ENCODE measurements at regions of chr7 and their contacts with region 1.

Region 1: DNA sequence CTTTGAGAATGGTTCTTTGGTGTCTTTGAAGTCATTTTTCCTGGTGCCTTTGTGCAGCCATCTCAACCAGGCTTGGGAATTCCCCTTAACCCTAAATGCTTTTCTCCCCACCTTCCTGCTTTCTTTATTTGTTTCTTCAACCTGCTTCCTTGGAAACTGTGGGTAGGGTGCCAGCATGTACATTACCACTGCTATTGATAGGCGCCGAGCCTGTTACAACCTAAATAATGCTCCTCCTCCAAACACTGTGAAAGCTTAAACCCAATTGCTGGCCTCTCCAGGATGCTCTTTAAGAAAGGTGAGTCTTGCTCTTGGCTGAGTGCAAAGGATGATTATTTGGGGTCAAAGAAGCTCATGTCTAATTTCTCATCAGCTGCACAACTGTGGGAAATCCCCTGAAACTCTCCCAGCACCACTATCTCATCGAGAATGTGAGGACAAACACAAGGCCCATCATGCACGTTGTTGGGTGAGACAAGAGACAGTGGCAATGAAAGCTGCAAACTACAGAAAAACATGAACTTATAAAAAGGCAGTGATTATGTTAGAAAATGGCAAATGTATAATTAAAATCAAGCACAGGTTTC is 285.5 kb upstream of the IGFBP3 start:
- DNase-seq: peak; percentile 48 to 52
- H3K4me3 ChIP-seq: no peak overlapping the region
- H3K27ac ChIP-seq: peak overlapping the region; percentile 63; the same call in 1 of the 2 replicates
- H3K4me1 ChIP-seq: peaks cover 25% of the 10 kb centered on the region
- H3K27me3 ChIP-seq: no peaks in the 10 kb centered on the region
- CTCF ChIP-seq: no peak

Region 2: DNA sequence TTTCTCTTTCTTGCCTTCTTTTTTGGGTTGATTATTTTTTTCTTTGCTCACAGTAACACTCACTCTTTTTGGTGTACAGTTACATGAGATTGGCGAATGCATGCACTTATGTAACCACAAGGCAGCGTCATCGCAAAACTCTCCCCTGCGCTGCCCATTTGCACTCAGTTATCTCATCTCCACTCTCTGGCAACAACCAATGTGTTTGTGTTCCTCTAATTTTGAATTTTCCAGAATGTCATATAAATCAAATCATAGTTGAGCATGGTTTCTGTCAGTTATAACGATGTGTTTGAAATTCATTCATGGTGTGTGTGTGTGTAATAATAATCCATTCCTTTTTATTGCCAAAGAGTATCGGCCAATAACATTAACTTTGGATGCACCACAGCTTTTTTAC is 262.5 kb before region 1 on chr7:
- CTCF ChIA-PET with region 1: no interaction called
- POLR2A ChIA-PET with region 1: interaction called, 11 read pairs
- intact Hi-C with region 1: no loop called
- DNase-seq: no peak
- H3K4me3 ChIP-seq: no peak overlapping the region
- H3K27ac ChIP-seq: no peak overlapping the region
- H3K4me1 ChIP-seq: no peaks in the 10 kb centered on the region
- H3K27me3 ChIP-seq: no peaks in the 10 kb centered on the region
- CTCF ChIP-seq: no peak

Region 3: DNA sequence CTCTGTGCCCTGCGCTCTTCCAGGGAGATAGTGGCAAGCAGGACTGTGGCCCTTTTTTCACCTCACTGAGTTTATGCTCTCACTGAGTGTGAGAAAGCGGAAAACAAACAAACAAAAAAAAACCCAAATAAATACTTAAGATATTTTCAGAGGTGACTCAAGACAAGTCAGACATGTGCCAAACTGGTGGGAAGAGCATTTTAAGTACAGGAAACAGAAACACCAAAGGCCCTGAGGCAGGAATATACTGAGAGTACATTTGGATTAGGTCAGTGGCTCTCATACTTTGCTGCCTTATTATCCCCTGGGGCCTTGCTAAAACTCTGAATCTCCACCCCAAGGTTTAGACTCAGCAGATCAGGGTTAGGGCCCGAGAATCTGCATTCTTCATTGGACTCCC is 173.6 kb before region 1 on chr7:
- CTCF ChIA-PET with region 1: no interaction called
- POLR2A ChIA-PET with region 1: no interaction called
- intact Hi-C with region 1: loop called (anchors 2 kb)
- DNase-seq: peak; percentile 54 to 99
- H3K4me3 ChIP-seq: no peak overlapping the region; the same call in 1 of the 2 replicates
- H3K27ac ChIP-seq: peak overlapping the region; percentile 92
- H3K4me1 ChIP-seq: peaks cover 58% of the 10 kb centered on the region
- H3K27me3 ChIP-seq: no peaks in the 10 kb centered on the region
- CTCF ChIP-seq: no peak

Region 4: GRCh38 chr7:46126675-46127300 is 79.8 kb before region 1 on chr7:
- CTCF ChIA-PET with region 1: no interaction called
- POLR2A ChIA-PET with region 1: no interaction called
- intact Hi-C with region 1: no loop called
- DNase-seq: peak; percentile 46 to 99
- H3K4me3 ChIP-seq: no peak overlapping the region
- H3K27ac ChIP-seq: peak overlapping the region; percentile 75
- H3K4me1 ChIP-seq: peaks cover 30% of the 10 kb centered on the region
- H3K27me3 ChIP-seq: no peaks in the 10 kb centered on the region
- CTCF ChIP-seq: no peak

Region 5: GRCh38 chr7:46139079-46139478 is 67.5 kb before region 1 on chr7:
- CTCF ChIA-PET with region 1: no interaction called
- POLR2A ChIA-PET with region 1: interaction called, 12 read pairs
- intact Hi-C with region 1: loop called (anchors 1 kb)
- DNase-seq: peak; percentile 40 to 100
- H3K4me3 ChIP-seq: no peak overlapping the region
- H3K27ac ChIP-seq: peak overlapping the region; percentile 83
- H3K4me1 ChIP-seq: peaks cover 29% of the 10 kb centered on the region
- H3K27me3 ChIP-seq: no peaks in the 10 kb centered on the region
- CTCF ChIP-seq: no peak

Region 6: DNA sequence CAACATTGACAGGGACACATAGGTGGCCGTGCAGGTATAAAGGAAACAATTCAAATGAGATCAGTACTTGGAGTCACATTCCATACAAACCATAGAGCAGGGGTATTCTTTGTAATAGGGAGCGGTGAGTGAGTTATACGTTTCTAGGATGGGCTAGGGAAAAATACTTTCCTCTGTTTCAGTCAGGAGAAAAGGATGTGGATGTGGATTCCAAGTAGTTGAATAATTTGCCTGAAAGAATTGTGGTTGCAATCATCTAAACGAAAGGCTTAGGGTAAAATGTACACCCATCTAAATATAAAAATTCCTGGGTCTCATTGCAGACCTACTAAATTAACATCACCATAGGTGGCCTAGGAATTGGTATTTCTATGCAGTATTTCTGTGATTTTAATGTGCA is 14.8 kb before region 1 on chr7:
- CTCF ChIA-PET with region 1: no interaction called
- POLR2A ChIA-PET with region 1: interaction called, 5 read pairs
- intact Hi-C with region 1: loop called (anchors 1 kb)
- DNase-seq: peak; percentile 62 to 93
- H3K4me3 ChIP-seq: no peak overlapping the region
- H3K27ac ChIP-seq: peak overlapping the region; percentile 88
- H3K4me1 ChIP-seq: peaks cover 25% of the 10 kb centered on the region
- H3K27me3 ChIP-seq: no peaks in the 10 kb centered on the region
- CTCF ChIP-seq: no peak

Region 7: DNA sequence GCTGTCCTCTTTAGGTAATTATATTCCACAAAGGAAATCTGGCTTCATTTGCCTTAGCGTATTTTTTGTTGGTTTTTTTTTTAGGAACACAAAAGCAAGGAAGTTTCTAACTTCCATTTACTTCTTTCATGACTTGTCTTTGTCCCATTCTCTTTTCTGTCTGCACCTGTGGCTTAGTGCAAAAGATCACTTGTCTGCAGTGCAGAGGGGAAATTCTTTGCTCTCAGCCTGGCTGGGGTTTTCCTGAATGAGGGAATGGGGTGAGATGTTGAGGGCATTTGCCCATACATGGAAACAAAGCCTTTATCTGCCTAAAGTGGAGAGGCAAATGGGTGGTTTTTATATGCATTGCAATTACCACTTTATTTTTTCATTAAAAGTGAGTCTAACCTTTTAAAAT is 75.6 kb after region 1 on chr7:
- CTCF ChIA-PET with region 1: no interaction called
- POLR2A ChIA-PET with region 1: no interaction called
- intact Hi-C with region 1: loop called (anchors 1 kb)
- DNase-seq: no peak
- H3K4me3 ChIP-seq: no peak overlapping the region
- H3K27ac ChIP-seq: peak overlapping the region; percentile 83
- H3K4me1 ChIP-seq: peaks cover 31% of the 10 kb centered on the region
- H3K27me3 ChIP-seq: no peaks in the 10 kb centered on the region
- CTCF ChIP-seq: no peak

Region 8: GRCh38 chr7:46544374-46545008 is 337.9 kb after region 1 on chr7:
- CTCF ChIA-PET with region 1: no interaction called
- POLR2A ChIA-PET with region 1: interaction called, 8 read pairs
- intact Hi-C with region 1: loop called (anchors 5 kb)
- DNase-seq: peak; percentile 34 to 84
- H3K4me3 ChIP-seq: no peak overlapping the region
- H3K27ac ChIP-seq: peak overlapping the region; percentile 67
- H3K4me1 ChIP-seq: peaks cover 30% of the 10 kb centered on the region
- H3K27me3 ChIP-seq: no peaks in the 10 kb centered on the region
- CTCF ChIP-seq: no peak

Measured in PC-9 (cell line).